ENCODE measurements at regions of chr20 and their contacts with region 1.

Region 1: DNA sequence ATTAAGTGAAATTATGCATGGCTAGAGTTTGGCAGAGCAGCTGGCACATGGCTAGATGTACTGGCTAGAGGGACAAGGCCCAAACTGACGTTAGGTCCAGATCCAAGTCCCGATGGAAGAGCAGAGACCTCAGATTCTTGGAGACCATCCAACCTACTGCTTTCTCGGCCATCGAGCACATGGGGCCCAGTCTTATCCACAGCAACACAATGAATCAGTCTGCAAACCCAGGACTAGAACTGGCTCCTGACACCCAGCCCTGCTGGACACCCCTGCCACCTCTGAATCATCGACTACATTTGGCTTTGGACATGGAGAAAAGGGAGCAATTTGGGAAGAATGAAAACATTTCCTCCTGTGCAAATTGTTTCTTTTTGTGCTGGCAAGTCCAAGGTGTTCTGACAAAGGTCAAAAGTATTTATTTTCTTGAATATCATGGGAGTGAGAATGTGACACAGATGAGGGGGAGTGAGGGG is 23.9 kb upstream of the YWHAB start:
- DNase-seq: peak; percentile 20
- H3K4me3 ChIP-seq: no peak overlapping the region
- H3K27ac ChIP-seq: no peak overlapping the region
- H3K4me1 ChIP-seq: peaks cover 3% of the 10 kb centered on the region
- H3K27me3 ChIP-seq: no peaks in the 10 kb centered on the region
- CTCF ChIP-seq: no peak

Region 2: DNA sequence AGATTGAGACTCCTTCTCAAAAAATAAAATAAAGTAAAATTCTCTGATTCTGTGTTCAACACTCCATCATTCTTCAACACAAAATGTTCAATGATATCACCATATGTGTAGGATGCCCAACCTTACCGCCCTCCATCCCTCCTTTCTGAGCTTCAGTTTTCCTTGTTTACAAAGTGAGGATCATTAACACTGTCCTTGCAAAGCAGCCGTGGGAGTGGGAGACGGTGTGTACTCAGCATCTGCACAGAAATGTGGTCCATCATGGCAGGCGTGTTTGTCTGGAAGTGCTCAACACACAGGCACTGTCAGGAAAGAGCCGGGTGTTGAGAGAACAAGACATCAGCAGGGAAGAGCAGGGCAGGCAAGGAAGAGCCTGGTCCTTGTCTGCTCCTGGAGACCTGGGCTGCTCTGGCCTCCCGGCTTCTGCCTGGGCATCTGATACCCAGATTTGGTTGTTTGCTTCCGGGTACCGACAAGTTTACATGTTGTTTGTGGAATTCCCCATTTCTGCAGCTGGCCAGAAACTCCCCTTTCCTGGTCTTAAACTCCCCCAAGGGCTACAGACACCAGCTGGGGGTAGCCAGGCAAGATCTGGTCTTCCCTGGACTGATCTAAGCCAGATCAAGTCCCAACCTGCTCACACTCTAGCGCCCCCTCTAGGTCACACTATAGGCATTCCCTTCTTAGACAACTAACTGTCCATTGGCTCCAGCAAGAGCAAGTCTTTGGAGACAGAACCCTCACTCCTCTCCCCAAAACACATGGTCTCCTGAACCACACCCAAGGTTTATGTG is 412.6 kb before region 1 on chr20:
- CTCF ChIA-PET with region 1: no interaction called
- dilution Hi-C with region 1: loop called (anchors 25 kb)
- in situ Hi-C with region 1: no loop called
- intact Hi-C with region 1: no loop called
- DNase-seq: no peak
- H3K4me3 ChIP-seq: no peak overlapping the region
- H3K27ac ChIP-seq: no peak overlapping the region
- H3K4me1 ChIP-seq: no peaks in the 10 kb centered on the region
- H3K27me3 ChIP-seq: no peaks in the 10 kb centered on the region
- CTCF ChIP-seq: peak; percentile 38 to 46

Region 3: GRCh38 chr20:44598423-44599305 is 262.9 kb before region 1 on chr20:
- CTCF ChIA-PET with region 1: no interaction called
- dilution Hi-C with region 1: no loop called
- in situ Hi-C with region 1: no loop called
- intact Hi-C with region 1: no loop called
- DNase-seq: no peak
- H3K4me3 ChIP-seq: no peak overlapping the region
- H3K27ac ChIP-seq: no peak overlapping the region
- H3K4me1 ChIP-seq: peaks cover 5% of the 10 kb centered on the region
- H3K27me3 ChIP-seq: no peaks in the 10 kb centered on the region
- CTCF ChIP-seq: no peak

Region 4: GRCh38 chr20:44683263-44684046 is 178.1 kb before region 1 on chr20:
- CTCF ChIA-PET with region 1: no interaction called
- dilution Hi-C with region 1: no loop called
- in situ Hi-C with region 1: loop called in 1 of 2 experiments (anchors 10 kb)
- intact Hi-C with region 1: no loop called
- DNase-seq: peak; percentile 58
- H3K4me3 ChIP-seq: no peak overlapping the region
- H3K27ac ChIP-seq: no peak overlapping the region
- H3K4me1 ChIP-seq: peaks cover 8% of the 10 kb centered on the region
- H3K27me3 ChIP-seq: no peaks in the 10 kb centered on the region
- CTCF ChIP-seq: peak; percentile 63 to 84

Region 5: DNA sequence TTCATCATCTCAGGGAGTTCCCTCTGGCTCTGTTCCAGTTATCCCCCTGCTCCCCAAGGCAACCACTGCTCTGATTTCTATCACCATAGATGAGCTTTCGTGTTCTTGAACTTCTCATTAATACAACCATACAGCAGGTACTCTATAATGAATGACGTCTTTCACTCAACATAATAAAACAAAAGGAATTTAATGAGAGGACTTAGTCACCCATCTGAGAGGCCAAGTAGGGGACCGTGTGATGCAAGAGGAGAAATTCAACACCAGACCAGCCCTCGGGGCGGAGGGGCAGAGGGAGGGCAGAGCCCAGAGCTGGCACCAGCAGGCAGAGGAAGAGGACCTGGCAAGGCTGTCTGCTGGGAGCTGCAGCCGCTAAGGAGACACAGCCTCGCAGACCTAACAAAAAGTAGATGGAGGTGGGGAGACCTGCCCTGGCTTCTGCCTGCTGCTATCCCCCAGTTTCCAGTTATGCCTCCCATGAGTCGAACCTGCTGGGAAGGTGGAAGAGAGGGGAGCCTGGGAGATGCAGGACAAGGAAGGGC is 132.7 kb before region 1 on chr20:
- CTCF ChIA-PET with region 1: no interaction called
- dilution Hi-C with region 1: no loop called
- in situ Hi-C with region 1: no loop called
- intact Hi-C with region 1: no loop called
- DNase-seq: peak; percentile 98
- H3K4me3 ChIP-seq: no peak overlapping the region
- H3K27ac ChIP-seq: peak overlapping the region; percentile 18
- H3K4me1 ChIP-seq: peaks cover 33% of the 10 kb centered on the region
- H3K27me3 ChIP-seq: no peaks in the 10 kb centered on the region
- CTCF ChIP-seq: no peak

Region 6: GRCh38 chr20:44738813-44739477 is 122.6 kb before region 1 on chr20:
- CTCF ChIA-PET with region 1: no interaction called
- dilution Hi-C with region 1: loop called (anchors 5 kb)
- in situ Hi-C with region 1: loop called (anchors 5 to 10 kb)
- intact Hi-C with region 1: no loop called
- DNase-seq: peak; percentile 73
- H3K4me3 ChIP-seq: no peak overlapping the region
- H3K27ac ChIP-seq: no peak overlapping the region
- H3K4me1 ChIP-seq: peaks cover 4% of the 10 kb centered on the region
- H3K27me3 ChIP-seq: no peaks in the 10 kb centered on the region
- CTCF ChIP-seq: no peak

Region 7: GRCh38 chr20:44837946-44838345 is 23.6 kb before region 1 on chr20:
- CTCF ChIA-PET with region 1: no interaction called
- dilution Hi-C with region 1: no loop called
- in situ Hi-C with region 1: no loop called
- intact Hi-C with region 1: no loop called
- DNase-seq: no peak
- H3K4me3 ChIP-seq: no peak overlapping the region
- H3K27ac ChIP-seq: no peak overlapping the region
- H3K4me1 ChIP-seq: no peaks in the 10 kb centered on the region
- H3K27me3 ChIP-seq: peaks cover 9% of the 10 kb centered on the region
- CTCF ChIP-seq: no peak